Activated CD4-positive, alpha-beta T cell treated with anti-CD3 and anti-CD28 coated beads, Interleukin-2, amount 10 ng/mL, durations not matched to agents 7 days and 5 days (primary cell): ENCODE measurements at regions of chr17 and their contacts with region 1.

Region 1: DNA sequence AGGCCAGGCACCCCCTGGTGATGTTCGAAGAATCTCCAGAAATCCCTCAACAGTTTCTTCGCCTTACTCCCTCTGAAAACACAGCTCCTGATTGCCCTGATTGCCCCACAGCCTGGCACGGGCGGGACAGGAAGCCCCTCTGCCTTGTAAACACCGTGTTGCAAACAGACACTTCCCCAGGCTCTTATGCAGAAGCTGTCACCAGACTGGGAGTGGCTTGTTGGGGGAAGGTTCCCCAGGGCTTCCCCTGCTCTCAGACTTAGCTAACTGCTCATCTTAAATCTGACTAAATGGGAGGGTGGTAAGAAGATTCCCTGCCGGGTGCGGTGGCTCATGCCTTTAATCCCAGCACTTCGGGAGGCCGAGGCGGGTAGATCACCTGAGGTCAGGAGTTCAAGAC is 11.2 kb downstream of the PIK3R5 start:
- DNase-seq: peak; percentile 85
- H3K4me3 Mint-ChIP-seq: peak overlapping the region; percentile 49
- H3K27ac Mint-ChIP-seq: peak overlapping the region; percentile 85
- H3K4me1 Mint-ChIP-seq: peaks cover 97% of the 10 kb centered on the region
- H3K27me3 Mint-ChIP-seq: no peaks in the 10 kb centered on the region

Region 2: GRCh38 chr17:8820311-8821010 is 133.9 kb before region 1 on chr17:
- CTCF ChIA-PET with region 1: no interaction called
- POLR2A ChIA-PET with region 1: interaction called, 10 read pairs
- DNase-seq: no peak
- H3K4me3 Mint-ChIP-seq: no peak overlapping the region
- H3K27ac Mint-ChIP-seq: no peak overlapping the region
- H3K4me1 Mint-ChIP-seq: no peaks in the 10 kb centered on the region
- H3K27me3 Mint-ChIP-seq: no peaks in the 10 kb centered on the region

Region 3: GRCh38 chr17:8930649-8931048 is 23.7 kb before region 1 on chr17:
- CTCF ChIA-PET with region 1: no interaction called
- POLR2A ChIA-PET with region 1: no interaction called
- DNase-seq: no peak
- H3K4me3 Mint-ChIP-seq: no peak overlapping the region
- H3K27ac Mint-ChIP-seq: peak overlapping the region; percentile 21
- H3K4me1 Mint-ChIP-seq: peaks cover 36% of the 10 kb centered on the region
- H3K27me3 Mint-ChIP-seq: no peaks in the 10 kb centered on the region

Region 4: DNA sequence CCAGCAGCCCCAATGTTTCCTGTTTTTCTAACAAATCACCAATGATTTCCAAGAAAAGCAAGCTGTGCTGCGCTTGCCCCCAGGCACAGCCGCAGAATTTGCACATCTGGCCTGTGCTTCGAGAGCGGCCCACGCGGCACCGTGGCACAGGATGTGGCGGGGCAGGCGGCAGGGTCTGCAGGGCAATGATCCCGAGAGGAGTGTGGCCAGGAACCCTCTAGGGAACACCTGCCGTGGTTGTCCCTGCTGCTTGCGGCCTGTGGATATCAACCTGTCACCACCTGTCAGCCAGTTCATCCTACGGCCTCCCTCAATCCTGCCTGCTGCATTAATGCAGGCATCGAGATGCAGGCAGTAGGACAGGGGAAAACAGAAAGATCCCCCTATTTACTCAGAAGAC is 12.8 kb before region 1 on chr17:
- CTCF ChIA-PET with region 1: interaction called, 38 read pairs
- POLR2A ChIA-PET with region 1: no interaction called
- DNase-seq: peak; percentile 81
- H3K4me3 Mint-ChIP-seq: peak overlapping the region; percentile 64
- H3K27ac Mint-ChIP-seq: peak overlapping the region; percentile 99
- H3K4me1 Mint-ChIP-seq: peaks cover 86% of the 10 kb centered on the region
- H3K27me3 Mint-ChIP-seq: no peaks in the 10 kb centered on the region